Cardiac septum (tissue), 1 donor: ENCODE measurements at regions of chr11 and their contacts with region 1.

Region 1: DNA sequence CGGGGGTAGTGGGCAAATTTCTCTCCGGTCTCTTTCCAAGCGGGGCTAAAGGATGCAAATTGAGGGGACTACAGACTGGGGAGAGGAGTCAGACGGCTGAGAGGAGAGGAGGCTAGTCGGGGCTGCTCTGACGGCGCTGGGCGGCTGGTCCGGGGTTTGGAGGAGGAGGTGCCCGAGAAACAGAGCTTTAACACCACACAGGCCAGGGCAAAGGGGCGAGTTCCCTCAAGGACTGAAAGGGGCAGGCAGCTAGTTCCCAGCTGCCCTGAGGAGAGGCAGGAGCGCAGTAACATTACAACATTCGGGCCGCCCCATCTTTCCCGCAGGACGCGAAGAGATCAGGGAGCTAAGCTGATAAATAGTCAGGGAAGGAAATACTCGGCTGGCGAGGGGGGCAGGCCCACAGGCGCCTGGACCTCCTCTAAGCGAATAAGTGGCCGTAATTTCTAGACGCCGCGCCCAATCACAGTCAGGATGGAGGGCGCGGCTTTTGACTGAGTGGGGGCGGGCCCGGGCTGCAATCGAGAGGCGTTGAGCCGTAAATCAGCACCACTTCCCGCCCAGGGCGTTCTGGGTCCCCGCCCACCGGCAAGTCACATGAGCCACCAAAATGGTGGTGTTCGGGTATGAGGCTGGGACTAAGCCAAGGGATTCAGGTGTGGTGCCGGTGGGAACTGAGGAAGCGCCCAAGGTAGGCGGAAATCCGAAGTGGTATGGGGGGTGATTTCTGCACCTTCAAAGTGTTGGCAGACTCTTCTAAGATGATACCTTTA is at the start of gene TMEM126B:
- DNase-seq: peak; percentile 99
- total RNA-seq, gene TMEM126B: 45.2 TPM

Region 2: DNA sequence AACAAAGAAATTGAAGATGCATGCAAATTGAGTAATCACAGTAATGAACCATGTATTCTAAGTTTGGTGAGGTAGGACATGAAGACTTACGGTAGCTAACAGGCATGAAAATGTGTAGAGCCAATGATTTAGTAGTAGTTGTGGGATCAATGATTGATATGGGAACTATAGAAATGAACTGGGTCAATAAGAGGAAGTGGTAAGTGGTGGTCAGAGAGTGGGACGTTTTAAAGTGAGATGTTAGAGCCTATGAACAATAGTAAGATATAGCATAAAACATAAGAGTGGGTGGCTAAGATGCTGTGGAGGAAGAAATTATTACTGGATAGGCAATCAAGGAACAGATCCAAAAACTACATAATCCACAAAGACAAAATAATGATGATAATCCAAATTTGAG is 46.1 kb before region 1 on chr11:
- intact Hi-C with region 1: no loop called
- DNase-seq: no peak

Region 3: GRCh38 chr11:85647604-85648299 is 19.6 kb after region 1 on chr11 and contains the start of gene TMEM126A:
- intact Hi-C with region 1: loop called (anchors 2 kb)
- DNase-seq: peak; percentile 96
- total RNA-seq, gene TMEM126A: 44.0 TPM

Region 4: DNA sequence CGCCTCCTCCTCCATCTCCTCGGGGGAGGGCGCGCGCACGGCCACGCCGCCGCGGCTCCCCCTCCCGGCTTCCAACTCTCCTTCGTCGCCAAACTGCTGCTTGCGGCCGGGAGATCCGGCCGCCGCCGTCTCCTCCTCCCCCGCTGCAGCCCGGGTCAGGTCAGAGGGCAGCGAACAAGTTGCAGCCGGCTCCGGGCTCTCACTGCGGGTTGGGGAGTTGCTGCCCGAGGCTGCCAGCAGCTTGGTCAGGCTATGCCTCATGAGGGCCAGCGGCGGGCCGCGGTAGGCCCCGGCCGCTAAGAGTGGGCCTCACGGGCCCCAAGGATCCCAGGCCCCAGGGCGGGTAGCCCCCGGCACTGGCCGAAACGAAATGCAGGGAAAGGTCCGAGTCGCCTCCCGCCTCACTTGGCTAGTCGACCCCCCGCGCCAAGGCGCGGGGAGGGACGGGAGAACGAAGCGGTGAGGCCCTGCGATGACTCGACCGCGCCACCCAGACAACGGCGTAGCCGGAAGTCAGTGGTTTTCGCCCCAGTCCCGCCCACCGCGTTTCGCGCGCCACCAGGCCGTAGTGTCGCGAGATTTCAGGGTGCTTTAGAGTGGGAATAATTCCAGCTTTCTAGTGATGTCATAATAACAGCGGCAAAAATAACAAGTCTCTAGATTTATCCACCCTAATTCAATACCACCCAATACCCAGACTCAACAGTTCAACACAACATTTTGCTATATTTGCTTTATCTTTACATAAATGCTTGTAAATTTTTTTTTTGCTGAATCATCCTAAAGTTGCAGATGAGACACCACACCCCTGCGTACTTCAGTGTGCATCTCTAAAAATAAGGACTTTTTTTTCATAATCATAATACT is 36.7 kb after region 1 on chr11 and contains the start of gene CREBZF:
- intact Hi-C with region 1: loop called (anchors 1 kb)
- DNase-seq: peak; percentile 97
- total RNA-seq, gene CREBZF: 19.4 TPM